ENCODE measurements at regions of chr2 and their contacts with region 1.

Region 1: GRCh38 chr2:74147727-74148456 is at the start of gene BOLA3:
- DNase-seq: peak; percentile 84
- H3K4me3 Mint-ChIP-seq: no peak within 1 kb of the TSS
- H3K27ac Mint-ChIP-seq: no peak within 1 kb of the TSS
- H3K4me1 Mint-ChIP-seq: peaks cover 1% of the 10 kb centered on the region
- H3K27me3 Mint-ChIP-seq: no peaks in the 10 kb centered on the region
- total RNA-seq, gene BOLA3: 91.2 and 92.7 TPM in 2 replicates

Region 2: DNA sequence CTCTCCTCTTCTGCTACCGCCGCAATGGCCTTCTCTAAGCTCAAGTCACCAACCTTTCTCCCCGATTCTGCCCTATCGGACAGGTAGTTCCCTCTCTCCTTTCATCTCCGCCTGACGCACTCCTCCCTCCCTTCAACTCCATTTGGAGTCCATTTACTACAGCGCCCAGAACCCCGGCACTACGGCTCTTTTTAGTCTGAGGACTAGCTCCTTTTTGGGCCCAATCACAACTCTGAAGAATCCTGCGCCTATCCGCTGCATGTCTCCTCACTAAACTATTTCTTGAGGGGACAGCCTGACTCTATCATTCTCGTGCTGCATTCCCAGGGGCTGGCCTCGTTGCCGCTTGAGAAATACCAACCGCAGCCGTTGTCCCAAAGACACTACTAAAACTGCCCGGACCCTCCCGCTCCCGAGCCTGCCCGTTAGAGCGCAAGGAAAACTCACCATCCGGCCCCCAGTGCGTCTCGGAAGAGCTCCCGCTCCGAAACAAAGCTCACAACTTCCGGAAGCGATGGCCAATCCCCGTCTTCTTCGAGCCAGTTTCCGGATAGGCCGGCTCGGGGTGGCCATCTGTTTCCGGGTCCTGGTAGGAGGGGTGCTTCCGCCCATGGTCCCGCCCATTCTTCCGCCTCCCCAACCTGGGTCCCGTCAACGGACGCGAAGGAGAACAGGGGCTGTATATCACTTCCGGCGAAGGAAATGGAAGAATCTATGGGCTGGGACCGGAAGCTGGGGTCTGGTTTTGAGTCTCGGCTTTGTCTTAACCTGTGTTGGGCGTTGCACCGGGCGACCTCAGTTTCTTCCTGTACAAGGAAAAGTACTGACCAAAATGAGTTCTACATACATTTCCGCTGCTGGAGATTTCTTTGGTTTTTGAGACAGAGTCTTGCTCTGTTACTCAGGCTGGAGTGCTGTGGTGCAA is 410.8 kb before region 1 on chr2 and contains the start of gene TPRKB:
- intact Hi-C with region 1: loop called (anchors 1 kb)
- DNase-seq: peak; percentile 95
- H3K4me3 Mint-ChIP-seq: peak within 1 kb of the TSS; percentile 97
- H3K27ac Mint-ChIP-seq: peak within 1 kb of the TSS; percentile 87
- H3K4me1 Mint-ChIP-seq: peaks cover 8% of the 10 kb centered on the region
- H3K27me3 Mint-ChIP-seq: no peaks in the 10 kb centered on the region
- total RNA-seq, gene TPRKB: 31.9 and 36.0 TPM in 2 replicates

Region 3: GRCh38 chr2:73926493-73927338 is 221.2 kb before region 1 on chr2 and contains the start of gene DGUOK:
- intact Hi-C with region 1: loop called (anchors 5 kb)
- DNase-seq: peak; percentile 98
- H3K4me3 Mint-ChIP-seq: peak within 1 kb of the TSS; percentile 89
- H3K27ac Mint-ChIP-seq: peak within 1 kb of the TSS; percentile 94
- H3K4me1 Mint-ChIP-seq: peaks cover 49% of the 10 kb centered on the region
- H3K27me3 Mint-ChIP-seq: no peaks in the 10 kb centered on the region
- total RNA-seq, gene DGUOK: 86.8 and 90.9 TPM in 2 replicates

Region 4: DNA sequence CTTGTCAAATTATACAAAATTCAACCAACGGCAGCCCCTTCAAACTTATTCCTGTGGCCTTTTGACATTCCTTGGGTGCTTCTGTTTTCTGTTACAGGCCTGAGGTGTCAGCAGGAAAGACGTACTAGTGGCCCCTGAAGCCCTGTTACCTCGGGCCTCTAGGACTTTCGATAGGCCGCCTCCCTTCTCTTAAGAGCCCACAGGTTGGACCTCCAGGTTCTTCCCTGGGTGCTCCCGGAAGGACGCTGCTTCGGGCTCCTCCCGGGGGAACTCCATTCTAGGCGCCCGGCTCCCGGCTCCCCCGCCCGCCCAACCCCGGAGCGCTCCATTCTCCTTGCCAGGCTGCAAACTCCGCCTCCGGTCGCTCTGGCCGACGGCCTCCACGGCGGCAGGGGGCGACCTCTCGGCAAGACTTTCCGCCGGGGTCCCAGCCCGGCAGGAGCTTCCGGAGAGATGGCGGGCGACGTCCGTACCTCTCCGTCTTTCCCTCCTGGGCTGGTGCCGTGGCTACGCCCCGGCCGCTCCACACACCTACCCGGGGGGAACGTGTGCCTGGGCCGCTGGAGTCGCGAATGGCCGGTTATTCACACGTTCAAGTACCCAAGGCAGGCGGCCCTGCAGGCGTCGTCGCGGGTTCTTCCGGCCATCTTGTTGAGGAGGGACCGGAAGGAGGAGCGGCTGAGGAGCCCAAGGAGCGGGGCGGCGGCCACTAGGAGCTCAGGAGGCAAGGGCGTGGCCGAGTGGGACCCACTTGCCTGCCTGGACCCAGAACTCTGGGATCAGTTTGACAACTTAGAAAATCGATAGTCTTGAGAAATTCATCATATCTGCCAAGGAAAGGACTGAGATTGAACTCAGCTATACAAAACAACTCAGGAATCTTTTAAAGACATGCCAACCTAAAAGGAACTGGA is 27.7 kb before region 1 on chr2:
- intact Hi-C with region 1: loop called (anchors 1 kb)
- DNase-seq: peak; percentile 82
- H3K4me3 Mint-ChIP-seq: peak overlapping the region; percentile 83
- H3K27ac Mint-ChIP-seq: peak overlapping the region; percentile 89
- H3K4me1 Mint-ChIP-seq: peaks cover 8% of the 10 kb centered on the region
- H3K27me3 Mint-ChIP-seq: peaks cover 8% of the 10 kb centered on the region

Region 5: DNA sequence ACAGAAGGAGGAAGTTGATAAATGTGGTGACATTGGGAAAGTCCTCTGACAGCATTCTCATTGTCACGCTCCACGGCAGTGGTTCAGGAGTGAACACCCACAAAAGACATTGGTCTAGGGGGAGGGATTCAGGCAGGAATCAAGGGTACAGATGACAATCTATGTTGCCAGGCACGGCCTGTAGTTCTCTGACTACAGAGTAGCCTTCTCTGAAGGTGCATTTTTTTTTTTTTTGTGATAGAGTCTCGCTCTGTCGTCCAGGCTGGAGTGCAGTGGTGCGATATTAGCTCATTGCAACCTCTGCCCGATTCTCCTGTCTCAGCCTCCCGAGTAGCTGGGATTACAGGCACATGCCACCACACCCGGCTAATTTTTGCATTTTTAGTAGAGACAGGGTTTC is 38.1 kb after region 1 on chr2:
- intact Hi-C with region 1: no loop called
- DNase-seq: peak; percentile 46
- H3K4me3 Mint-ChIP-seq: no peak overlapping the region
- H3K27ac Mint-ChIP-seq: peak overlapping the region; percentile 75
- H3K4me1 Mint-ChIP-seq: peaks cover 35% of the 10 kb centered on the region
- H3K27me3 Mint-ChIP-seq: peaks cover 2% of the 10 kb centered on the region

Region 6: DNA sequence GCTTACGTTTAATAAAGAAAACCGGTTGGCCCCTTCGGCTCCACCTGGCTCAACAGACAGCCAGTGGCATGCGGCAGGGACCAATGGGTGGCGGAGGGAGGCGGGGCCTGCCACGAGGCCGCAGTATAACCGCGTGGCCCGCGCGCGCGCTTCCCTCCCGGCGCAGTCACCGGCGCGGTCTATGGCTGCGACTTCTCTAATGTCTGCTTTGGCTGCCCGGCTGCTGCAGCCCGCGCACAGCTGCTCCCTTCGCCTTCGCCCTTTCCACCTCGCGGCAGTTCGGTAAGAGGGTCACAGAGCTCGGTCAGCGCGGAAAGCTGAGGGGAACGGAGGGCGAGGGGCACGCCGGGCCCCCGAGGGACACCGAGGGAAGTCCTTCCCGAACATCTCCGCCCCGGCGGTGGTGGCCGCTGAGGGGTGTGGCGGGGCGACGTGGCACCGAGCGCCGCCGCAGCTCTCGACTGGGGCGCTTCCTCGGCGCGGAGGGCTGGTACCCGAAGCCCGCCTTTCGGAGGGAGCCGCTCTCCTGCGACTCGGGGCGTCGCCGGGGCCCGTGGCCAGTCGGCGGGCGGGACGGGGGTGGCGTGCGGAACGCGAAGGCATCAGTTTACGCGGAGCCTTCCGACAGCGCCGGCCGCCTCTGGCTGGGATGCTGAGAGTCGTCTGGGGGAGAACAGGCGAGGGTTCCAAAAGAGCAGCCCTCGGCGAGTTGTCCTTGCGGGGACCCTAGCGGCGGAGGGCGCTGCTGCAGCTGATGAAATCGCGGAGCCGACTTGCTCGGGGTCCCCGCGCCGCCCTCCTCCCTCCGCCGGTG is 50.8 kb after region 1 on chr2 and contains the start of gene MTHFD2:
- intact Hi-C with region 1: loop called (anchors 1 kb)
- DNase-seq: peak; percentile 93
- H3K4me3 Mint-ChIP-seq: peak within 1 kb of the TSS; percentile 100
- H3K27ac Mint-ChIP-seq: peak within 1 kb of the TSS; percentile 100
- H3K4me1 Mint-ChIP-seq: peaks cover 38% of the 10 kb centered on the region
- H3K27me3 Mint-ChIP-seq: no peaks in the 10 kb centered on the region
- total RNA-seq, gene MTHFD2: 371 and 381 TPM in 2 replicates